ENCODE measurements at regions of chr6 and their contacts with region 1.

Region 1: DNA sequence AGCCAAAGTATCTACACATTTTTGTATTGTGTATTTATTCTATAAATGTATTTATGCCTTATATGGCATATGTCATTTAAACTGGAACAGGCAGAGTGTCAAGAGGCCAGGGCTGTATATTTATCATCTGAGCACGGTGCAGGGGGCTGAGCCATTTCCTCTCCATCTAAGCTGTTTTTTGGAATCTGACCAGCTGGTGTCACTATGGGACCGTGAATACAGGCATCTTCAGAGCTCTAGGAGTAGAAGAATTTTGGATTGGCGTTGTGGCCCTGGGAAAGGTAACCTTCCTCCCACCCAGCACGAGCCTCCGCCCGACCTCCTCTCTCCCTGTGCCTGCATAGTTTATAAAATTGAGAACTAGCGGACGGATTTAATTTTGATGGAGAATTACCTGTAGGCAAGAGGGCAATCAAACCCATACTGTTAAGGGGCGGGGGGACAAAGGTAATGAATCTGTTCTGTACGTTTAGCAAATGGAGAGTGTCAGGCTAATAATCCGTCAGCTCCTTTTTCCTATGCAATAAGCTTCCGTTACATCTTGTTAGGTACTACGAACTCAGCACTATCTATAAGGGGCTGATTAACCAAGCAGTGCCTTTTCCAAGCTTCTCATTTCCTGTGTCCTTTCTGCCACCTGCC is 29.0 kb upstream of the EEF1E1 start:
- DNase-seq: no peak
- ATAC-seq: peak; percentile 96
- H3K4me3 ChIP-seq: no peak overlapping the region
- H3K27ac ChIP-seq: peak overlapping the region; percentile 80; the same call in 1 of the 2 replicates
- H3K4me1 ChIP-seq: peaks cover 6% of the 10 kb centered on the region; the same call in 1 of the 2 replicates
- H3K27me3 ChIP-seq: no peaks in the 10 kb centered on the region
- CTCF ChIP-seq: peak; percentile 79

Region 2: DNA sequence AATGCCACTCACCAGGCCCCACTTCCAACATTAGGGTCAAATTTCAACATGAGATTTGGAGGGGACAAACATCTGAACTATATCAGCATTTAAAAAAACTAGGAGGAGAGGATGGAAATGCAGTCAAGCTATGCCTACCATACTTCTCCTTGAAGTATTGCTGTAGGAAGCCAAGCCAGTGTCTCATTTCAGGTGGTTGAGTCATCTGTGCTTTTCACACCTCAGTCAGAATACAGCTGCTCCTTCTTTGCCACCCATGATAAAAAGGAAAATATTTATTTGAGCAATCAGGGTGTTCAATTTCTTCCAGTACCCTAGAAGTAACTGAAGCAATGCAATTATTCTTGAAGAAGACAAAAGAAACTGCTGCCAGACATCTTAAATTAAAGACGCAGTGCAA is 18.0 kb after region 1 on chr6:
- CTCF ChIA-PET with region 1: no interaction called
- POLR2A ChIA-PET with region 1: interaction called, 10 read pairs
- in situ Hi-C with region 1: no loop called
- intact Hi-C with region 1: no loop called
- DNase-seq: no peak
- ATAC-seq: no peak
- H3K4me3 ChIP-seq: no peak overlapping the region
- H3K27ac ChIP-seq: no peak overlapping the region; the same call in 1 of the 2 replicates
- H3K4me1 ChIP-seq: peaks cover 4% of the 10 kb centered on the region; the same call in 1 of the 2 replicates
- H3K27me3 ChIP-seq: no peaks in the 10 kb centered on the region
- CTCF ChIP-seq: no peak

Region 3: GRCh38 chr6:8180327-8181159 is 49.2 kb after region 1 on chr6:
- CTCF ChIA-PET with region 1: interaction called, 20 read pairs
- POLR2A ChIA-PET with region 1: no interaction called
- in situ Hi-C with region 1: no loop called
- intact Hi-C with region 1: no loop called
- DNase-seq: no peak
- ATAC-seq: peak; percentile 90
- H3K4me3 ChIP-seq: no peak overlapping the region
- H3K27ac ChIP-seq: peak overlapping the region; percentile 82
- H3K4me1 ChIP-seq: peaks cover 60% of the 10 kb centered on the region
- H3K27me3 ChIP-seq: no peaks in the 10 kb centered on the region
- CTCF ChIP-seq: no peak

Region 4: DNA sequence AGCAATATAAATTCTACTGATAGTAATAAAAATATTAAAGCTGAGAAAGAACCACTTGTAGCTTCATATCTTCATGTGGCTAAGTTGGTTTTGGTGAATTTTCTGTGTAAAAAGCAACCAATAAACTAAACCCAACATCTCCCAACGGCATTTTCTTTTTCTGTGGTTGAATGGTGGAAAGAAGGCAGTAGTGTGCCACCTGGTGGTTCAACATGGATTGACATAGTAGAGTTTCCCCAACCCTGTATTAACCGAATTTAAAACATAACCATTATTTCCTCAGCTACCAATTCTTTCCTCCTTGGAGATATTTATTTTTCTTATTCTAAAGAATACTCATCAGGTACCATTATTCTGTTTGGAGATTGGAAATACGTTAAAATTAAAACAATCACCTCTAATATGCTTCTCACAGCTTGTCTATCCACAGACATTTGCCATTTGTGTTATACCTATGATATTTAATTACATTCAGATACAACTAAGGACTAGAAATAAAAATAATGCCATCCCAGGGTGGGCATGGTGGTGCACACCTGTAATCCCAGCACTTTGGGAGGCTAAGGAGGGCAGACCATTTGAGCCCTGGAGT is 88.1 kb after region 1 on chr6:
- CTCF ChIA-PET with region 1: interaction called, 76 read pairs
- POLR2A ChIA-PET with region 1: interaction called, 4 read pairs
- in situ Hi-C with region 1: no loop called
- intact Hi-C with region 1: loop called (anchors 1 kb)
- DNase-seq: peak; percentile 32
- ATAC-seq: peak; percentile 91
- H3K4me3 ChIP-seq: no peak overlapping the region
- H3K27ac ChIP-seq: peak overlapping the region; percentile 81
- H3K4me1 ChIP-seq: peaks cover 21% of the 10 kb centered on the region
- H3K27me3 ChIP-seq: no peaks in the 10 kb centered on the region
- CTCF ChIP-seq: peak; percentile 76